ENCODE measurements at regions of chr11 and their contacts with region 1.

Region 1: DNA sequence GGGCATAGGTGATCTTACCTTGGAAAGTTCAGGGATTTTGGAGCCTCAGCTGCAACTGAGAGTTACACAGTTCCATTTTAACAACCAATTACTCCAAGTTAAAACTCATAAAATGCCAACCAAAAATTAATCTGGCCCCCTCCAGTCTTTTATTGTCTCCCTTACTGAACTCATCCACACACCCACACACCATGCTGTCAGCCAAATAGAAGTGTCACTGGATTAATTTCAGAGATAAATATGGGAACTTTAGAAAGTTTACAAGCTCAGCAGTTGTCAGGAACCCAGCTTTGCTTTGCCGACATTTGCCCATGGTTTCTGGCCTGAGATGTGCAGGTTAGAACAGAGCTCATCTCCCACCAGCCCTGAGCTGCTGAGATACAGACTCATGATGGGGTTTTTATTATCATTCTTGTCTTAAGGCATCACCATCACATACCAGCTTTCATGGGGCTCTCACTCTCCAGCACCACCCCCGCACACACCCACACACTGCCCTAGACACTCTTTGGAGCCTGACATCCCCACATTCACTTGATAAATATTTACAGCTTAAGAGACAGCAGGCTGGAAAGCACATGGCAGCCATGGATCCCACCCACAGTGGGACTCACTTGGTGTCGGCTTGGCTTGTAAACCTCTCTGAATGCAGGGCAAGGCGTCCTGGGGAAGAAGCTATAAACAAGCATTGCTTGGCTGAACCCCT is 23.7 kb upstream of the CTR9 start:
- DNase-seq: no peak
- H3K4me3 Mint-ChIP-seq: no peak overlapping the region
- H3K27ac Mint-ChIP-seq: no peak overlapping the region
- H3K4me1 Mint-ChIP-seq: peaks cover 21% of the 10 kb centered on the region
- H3K27me3 Mint-ChIP-seq: peaks cover 29% of the 10 kb centered on the region

Region 2: DNA sequence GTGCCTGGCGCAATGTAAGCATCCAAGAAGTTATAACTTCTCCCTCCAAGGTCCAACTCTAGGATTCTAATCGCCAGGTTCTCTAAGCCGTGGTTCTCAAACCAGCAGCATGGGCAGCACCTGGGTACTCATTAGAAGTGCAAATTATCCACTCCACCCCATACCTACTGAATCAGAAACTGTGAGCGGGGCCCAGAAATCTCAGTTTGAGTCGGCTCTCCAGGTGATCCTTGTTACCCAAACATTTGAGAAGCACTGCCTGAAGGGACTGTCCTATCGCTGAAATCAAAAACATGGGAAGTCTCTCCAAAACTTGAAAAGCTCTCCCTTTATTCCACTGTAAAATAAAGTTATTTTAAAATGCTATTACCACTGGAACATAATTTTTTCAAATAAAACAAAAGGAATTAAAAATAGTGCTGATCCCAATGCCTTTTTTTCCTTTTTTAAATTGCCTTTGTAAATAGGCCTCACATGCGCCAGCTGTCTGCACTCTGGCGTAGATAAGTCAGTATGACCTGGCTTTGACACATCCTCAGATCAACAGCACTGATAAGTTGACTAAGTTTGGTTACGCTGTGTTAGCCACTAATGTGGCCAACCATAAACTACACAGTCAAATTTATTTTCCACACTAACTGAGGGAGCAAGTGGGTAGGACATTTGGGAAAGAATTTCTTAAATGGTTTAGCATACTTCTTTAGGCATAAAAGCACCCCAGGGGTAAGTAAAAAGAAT is 15.3 kb after region 1 on chr11:
- intact Hi-C with region 1: loop called (anchors 2 kb)
- DNase-seq: no peak
- H3K4me3 Mint-ChIP-seq: peak overlapping the region; percentile 3
- H3K27ac Mint-ChIP-seq: peak overlapping the region; percentile 0
- H3K4me1 Mint-ChIP-seq: peaks cover 32% of the 10 kb centered on the region
- H3K27me3 Mint-ChIP-seq: no peaks in the 10 kb centered on the region

Measured in activated T-helper 2 cell treated with anti-CD3 and anti-CD28 coated beads, Interferon-gamma antibody, Interleukin-2, Interleukin-4, amounts not matched to agents 10 μg/mL and 5 μg/mL and 100 μg/mL, durations not matched to agents 14 hours and 24 hours and 36 hours (primary cell).